ENCODE measurements at regions of chr17 and their contacts with region 1.

Region 1: DNA sequence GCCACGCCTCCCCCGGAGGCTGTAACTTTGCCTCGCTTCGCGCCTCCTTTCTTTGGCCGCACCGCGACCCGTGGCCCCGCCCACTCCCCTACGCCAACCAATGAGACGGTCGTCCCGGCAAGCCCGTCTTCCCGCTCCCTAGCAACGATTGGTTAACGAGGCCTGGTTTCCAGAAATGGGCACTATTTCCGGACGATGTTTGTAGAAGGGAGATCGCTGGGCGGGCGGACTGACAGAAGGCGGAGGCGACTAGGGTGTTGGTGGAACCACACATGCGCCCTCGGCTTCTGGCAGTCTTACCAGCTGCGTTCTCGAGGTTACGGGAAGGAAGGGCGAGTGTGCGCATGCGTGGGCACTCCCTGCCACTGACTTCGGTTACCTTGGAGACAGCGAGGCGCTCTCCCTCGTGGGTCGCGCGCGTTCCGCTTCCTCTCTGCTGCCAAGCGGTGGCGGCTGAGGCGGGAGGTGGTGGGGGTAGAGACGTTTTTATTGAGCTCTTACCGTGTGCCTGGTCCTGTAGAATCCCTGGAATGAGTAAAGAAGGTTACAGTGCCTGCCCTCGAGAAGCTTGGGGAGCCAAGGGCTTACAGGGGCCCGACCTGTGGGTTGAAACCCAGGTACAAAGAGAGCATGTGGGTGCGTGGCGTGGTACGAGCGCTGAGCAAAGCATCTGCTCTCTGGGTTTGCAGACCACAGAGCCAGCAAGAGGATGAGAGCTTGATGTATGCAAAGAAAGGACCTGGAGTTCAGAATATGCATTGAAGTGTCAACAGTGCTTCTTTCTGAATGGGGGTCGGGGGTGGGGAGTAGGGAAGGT is 500 bp upstream of the MAP3K14 start:
- DNase-seq: peak; percentile 99
- H3K4me3 Mint-ChIP-seq: peak overlapping the region; percentile 88
- H3K27ac Mint-ChIP-seq: peak overlapping the region; percentile 95
- H3K4me1 Mint-ChIP-seq: peaks cover 80% of the 10 kb centered on the region
- H3K27me3 Mint-ChIP-seq: no peaks in the 10 kb centered on the region

Region 2: DNA sequence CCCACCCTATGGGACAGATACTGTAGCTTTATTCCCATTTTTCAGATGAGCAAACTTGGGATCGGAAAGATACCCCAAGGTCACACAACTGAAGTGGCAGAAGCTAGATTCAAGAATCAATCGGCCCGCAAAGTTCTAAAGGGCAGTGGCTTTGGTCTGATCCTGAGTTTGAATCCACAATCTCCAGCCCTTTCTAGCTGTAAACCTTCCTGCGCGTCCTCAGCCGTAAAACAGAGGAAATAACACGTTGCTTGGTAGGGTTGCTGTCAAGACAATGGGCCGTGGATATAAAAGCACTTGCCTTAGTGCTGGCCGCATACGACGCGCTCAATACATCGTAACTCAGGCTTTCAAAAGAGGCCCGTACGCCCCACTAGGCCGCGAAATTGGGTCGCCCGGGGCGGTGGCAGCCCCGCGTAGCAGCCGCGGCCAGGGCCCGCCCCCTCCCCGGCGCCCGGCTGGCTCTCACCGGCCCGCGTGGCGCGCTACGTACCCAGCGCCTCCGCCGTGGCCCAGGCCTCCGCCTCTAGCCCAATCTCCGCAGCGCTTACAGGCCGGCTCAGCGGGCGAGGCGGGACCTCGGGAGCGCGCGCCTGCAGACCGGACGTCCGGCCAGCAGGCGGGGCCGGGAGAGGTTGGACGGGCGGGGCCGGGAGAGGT is 266.1 kb before region 1 on chr17 and contains the start of gene DCAKD:
- intact Hi-C with region 1: loop called (anchors 5 kb)
- DNase-seq: peak; percentile 93
- H3K4me3 Mint-ChIP-seq: peak within 1 kb of the TSS; percentile 92
- H3K27ac Mint-ChIP-seq: peak within 1 kb of the TSS; percentile 94
- H3K4me1 Mint-ChIP-seq: peaks cover 47% of the 10 kb centered on the region
- H3K27me3 Mint-ChIP-seq: no peaks in the 10 kb centered on the region
- total RNA-seq, gene DCAKD: 24.0 and 24.9 TPM in 2 replicates

Region 3: DNA sequence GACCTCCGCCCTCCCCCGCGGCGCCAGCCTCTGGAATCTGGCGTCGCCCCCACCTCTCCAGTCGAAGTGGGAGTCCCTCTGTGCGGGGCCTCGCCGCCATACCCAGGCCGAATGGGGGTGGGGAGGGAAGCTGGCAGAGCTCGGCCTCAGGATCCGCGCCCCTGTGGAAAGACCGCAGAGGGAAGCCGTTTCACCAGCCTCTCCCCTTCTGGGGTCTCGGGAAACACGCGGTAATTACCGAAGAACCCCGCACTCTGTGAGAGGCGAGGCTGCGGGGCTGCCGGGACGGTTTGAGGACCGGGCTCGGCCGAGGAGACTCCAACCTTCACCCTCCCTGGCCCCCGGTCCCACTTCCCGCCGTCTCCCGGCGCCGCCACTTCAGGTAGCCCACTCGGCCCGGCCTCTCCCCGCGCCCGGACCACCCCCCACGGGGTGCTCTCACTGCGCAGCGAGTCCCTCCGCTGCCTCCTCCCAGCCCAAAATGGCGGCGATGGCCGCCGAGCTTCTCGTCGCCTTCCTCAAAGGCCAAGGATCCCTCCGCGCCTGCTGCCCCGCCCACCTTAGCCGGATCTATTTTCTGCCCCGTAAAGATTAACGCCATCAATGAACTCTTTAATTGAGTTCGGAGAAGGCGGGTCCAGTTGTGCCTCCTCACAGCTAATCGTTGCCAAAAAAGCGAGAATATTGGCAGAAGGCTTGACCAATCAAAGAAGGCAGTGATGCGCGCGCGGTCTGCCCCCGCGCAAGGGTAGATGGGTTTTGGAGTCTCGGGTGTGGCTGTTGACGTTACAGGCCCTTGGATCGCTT is 156.1 kb before region 1 on chr17:
- intact Hi-C with region 1: loop called (anchors 1 kb)
- DNase-seq: peak; percentile 98
- H3K4me3 Mint-ChIP-seq: peak overlapping the region; percentile 98
- H3K27ac Mint-ChIP-seq: peak overlapping the region; percentile 98
- H3K4me1 Mint-ChIP-seq: peaks cover 32% of the 10 kb centered on the region
- H3K27me3 Mint-ChIP-seq: no peaks in the 10 kb centered on the region

Region 4: DNA sequence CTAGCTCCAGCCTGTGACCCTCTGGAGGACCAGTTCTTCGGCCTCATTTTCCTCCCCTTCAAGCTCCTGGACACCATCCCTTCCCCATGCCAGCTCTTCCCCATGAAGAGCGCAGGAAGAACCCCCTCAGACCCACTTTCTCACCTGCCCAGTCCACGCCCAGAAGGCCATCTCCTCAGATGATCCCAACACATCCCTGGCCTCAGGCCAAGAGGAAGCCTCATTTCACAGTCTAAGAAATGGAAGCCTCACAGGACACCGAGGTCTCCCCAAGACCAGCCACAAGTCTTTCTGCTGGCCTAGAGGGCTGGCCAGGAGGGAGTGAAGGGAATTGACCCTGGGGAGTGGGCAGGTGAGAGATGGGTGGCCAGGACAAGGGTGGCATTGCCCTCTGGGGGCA is 63.4 kb before region 1 on chr17:
- intact Hi-C with region 1: no loop called
- DNase-seq: no peak
- H3K4me3 Mint-ChIP-seq: peak overlapping the region; percentile 41
- H3K27ac Mint-ChIP-seq: peak overlapping the region; percentile 61
- H3K4me1 Mint-ChIP-seq: peaks cover 66% of the 10 kb centered on the region
- H3K27me3 Mint-ChIP-seq: no peaks in the 10 kb centered on the region

Region 5: DNA sequence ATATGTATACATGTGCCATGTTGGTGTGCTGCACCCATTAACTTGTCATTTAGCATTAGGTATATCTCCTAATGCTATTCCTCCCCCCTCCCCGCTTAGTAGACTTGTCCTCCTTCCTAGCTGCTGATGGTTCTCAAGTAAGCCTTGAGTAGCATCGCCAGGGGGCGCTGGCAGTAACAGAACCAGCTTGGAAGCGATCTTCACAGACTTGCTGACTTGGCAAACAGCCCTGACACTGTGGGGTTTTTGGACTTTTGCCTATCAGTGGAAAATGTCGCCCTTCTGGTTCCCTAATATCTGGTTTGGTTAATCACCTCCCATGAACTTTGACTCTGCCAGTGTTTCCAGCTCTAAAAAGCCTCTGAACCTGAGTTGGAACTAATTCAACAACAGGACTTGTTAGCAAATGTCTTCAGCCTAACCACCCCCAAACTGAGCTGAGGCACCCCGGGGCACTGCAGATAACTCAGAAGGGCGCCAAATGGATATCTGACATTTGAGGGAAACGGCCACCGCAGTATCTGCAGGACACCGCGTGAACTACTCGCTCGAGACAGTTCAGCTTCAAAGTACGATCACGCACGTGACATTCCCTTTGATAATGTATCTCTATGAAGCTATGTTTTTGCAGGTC is 40.0 kb before region 1 on chr17:
- intact Hi-C with region 1: loop called (anchors 1 kb)
- DNase-seq: peak; percentile 79
- H3K4me3 Mint-ChIP-seq: no peak overlapping the region
- H3K27ac Mint-ChIP-seq: peak overlapping the region; percentile 20
- H3K4me1 Mint-ChIP-seq: peaks cover 12% of the 10 kb centered on the region
- H3K27me3 Mint-ChIP-seq: no peaks in the 10 kb centered on the region

Region 6: GRCh38 chr17:45385331-45385997 is 68.1 kb after region 1 on chr17:
- intact Hi-C with region 1: loop called (anchors 1 kb)
- DNase-seq: peak; percentile 81
- H3K4me3 Mint-ChIP-seq: no peak overlapping the region
- H3K27ac Mint-ChIP-seq: peak overlapping the region; percentile 77
- H3K4me1 Mint-ChIP-seq: peaks cover 24% of the 10 kb centered on the region
- H3K27me3 Mint-ChIP-seq: peaks cover 12% of the 10 kb centered on the region

Measured in activated T-helper 1 cell treated with anti-CD3 and anti-CD28 coated beads, Interleukin-12 subunit alpha, Interleukin-12 subunit beta, Interleukin-2, Interleukin-4 antibody, amounts not matched to agents 30 ng/mL and 10 ng/mL and 1 ng/mL, durations not matched to agents 14 hours and 24 hours and 36 hours (primary cell).